IMR-90 (cell line): ENCODE measurements at regions of chr13 and their contacts with region 1.

Region 1: DNA sequence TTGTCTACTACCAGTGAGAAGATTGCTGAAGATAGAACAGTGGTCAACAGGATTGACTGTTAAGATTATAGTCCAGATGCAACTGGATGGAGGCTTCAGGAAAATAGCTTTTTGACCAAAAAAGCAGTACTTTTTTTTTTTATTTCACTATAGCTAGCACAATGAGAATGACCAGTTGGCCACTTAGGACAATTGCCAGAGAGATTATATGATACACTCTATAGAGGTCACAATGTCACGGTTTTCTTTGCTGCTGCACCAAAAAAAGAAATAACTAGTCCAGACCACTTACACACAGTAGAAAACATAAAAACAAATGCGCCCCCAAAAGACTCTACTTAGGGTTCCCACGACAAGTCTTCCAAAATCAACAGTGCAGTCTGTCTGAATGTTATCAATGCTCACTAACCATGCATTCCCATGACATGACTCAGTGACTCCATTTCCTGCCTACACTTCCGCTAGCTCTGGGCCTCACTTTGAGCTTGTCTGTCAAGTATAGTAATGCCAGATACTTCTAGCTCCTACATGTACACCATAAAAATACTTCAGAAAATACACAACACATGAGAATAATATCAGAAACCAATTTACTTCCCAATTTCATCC is 209.1 kb upstream of the STARD13 start:
- DNase-seq: peak; percentile 97
- ATAC-seq: peak; percentile 84
- H3K4me3 ChIP-seq: no peak overlapping the region
- H3K27ac ChIP-seq: peak overlapping the region; percentile 88
- H3K4me1 ChIP-seq: peaks cover 9% of the 10 kb centered on the region
- H3K27me3 ChIP-seq: no peaks in the 10 kb centered on the region
- CTCF ChIP-seq: no peak
- POLR2A ChIP-seq: no peak
- RAD21 ChIP-seq: 0 out of 2 replicates have a peak, but pooled peaks have one; percentile 1

Region 2: DNA sequence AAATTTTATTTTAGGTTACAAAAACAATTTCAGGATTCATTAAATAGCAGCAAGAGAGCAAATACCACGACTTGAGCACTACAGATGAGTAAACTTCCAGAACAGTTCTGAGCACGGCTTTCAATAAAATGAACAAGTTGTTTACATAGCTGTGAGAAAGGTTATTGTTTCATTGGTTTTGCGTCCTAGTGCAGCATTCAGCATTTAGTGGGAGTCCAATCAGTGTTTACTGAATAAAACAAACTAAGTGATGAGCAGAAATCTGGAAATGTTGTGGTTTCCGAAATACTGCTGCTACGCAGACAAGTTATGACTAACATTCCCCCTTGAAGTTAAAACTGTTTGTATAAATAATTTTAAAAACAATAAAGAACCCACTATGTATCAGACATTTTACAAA is 42.3 kb after region 1 on chr13:
- CTCF ChIA-PET with region 1: no interaction called
- POLR2A ChIA-PET with region 1: no interaction called
- dilution Hi-C with region 1: no loop called
- in situ Hi-C with region 1: no loop called
- intact Hi-C with region 1: loop called (anchors 2 kb)
- DNase-seq: peak; percentile 95
- ATAC-seq: peak; percentile 88
- H3K4me3 ChIP-seq: no peak overlapping the region
- H3K27ac ChIP-seq: no peak overlapping the region
- H3K4me1 ChIP-seq: peaks cover 13% of the 10 kb centered on the region
- H3K27me3 ChIP-seq: no peaks in the 10 kb centered on the region
- CTCF ChIP-seq: no peak
- POLR2A ChIP-seq: 0 out of 2 replicates have a peak, but pooled peaks have one; percentile 30
- RAD21 ChIP-seq: peak; percentile 27; the same call in 1 of the 2 replicates